CD8-positive, alpha-beta T cell (primary cell): ENCODE measurements at regions of chr9 and their contacts with region 1.

Region 1: DNA sequence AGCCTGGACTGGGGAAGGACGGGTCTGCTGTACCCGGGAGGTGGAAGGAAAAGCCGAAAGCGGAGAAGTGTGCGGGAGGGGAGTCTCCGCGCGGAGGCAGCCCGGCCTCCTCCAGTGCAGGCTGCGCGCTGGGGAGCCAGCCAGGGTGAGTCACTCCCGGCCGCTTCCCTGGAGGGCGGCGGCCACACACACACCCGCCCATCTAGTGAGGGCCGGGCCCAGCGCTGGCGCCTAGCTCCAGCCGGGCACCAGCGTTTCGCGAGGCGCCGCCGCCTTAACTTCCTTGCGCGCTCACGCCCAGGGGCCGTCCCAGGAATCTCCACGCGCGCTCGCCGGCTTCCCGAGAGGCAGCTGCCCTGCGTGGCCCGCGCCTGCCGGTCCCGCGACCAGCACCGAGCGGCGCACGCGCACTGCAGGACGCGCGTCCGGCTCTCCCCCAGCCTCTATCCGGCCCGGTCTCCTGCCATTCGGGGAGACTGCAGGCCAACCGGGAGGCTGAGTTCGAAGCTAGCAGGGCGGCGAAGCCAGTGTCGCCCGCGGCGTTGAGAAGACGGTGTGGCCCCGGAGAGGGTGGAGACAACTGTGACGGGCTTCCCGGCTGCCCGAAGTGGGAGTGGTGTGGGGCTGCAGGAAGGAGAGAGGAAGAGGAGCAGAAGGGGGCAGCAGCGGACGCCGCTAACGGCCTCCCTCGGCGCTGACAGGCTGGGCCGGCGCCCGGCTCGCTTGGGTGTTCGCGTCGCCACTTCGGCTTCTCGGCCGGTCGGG is at the start of gene JAK2:
- DNase-seq: peak; percentile 44 to 90 (median 74)
- ATAC-seq: peak; percentile 85
- H3K4me3 ChIP-seq: peak within 1 kb of the TSS; percentile 62 to 78
- H3K4me3 Mint-ChIP-seq: peak within 1 kb of the TSS; percentile 92
- H3K27ac ChIP-seq: peak within 1 kb of the TSS; percentile 58 to 80
- H3K27ac Mint-ChIP-seq: peak within 1 kb of the TSS; percentile 91
- H3K4me1 ChIP-seq: peaks cover 26% of the 10 kb centered on the region
- H3K4me1 Mint-ChIP-seq: peaks cover 25% of the 10 kb centered on the region
- H3K27me3 ChIP-seq: no peaks in the 10 kb centered on the region
- H3K27me3 Mint-ChIP-seq: no peaks in the 10 kb centered on the region
- CTCF ChIP-seq: no peak
- total RNA-seq, gene JAK2: 4.6 to 6.1 TPM

Region 2: GRCh38 chr9:4382722-4383317 is 602.0 kb before region 1 on chr9:
- CTCF ChIA-PET with region 1: no interaction called
- POLR2A ChIA-PET with region 1: no interaction called
- intact Hi-C with region 1: loop called (anchors 5 kb)
- DNase-seq: peak in 3 of 9 experiments; percentile 20 to 60 (median 45)
- ATAC-seq: peak; percentile 42
- H3K4me3 ChIP-seq: no peak overlapping the region
- H3K4me3 Mint-ChIP-seq: no peak overlapping the region
- H3K27ac ChIP-seq: no peak overlapping the region
- H3K27ac Mint-ChIP-seq: no peak overlapping the region
- H3K4me1 ChIP-seq: no peaks in the 10 kb centered on the region
- H3K4me1 Mint-ChIP-seq: peaks cover 3% of the 10 kb centered on the region
- H3K27me3 ChIP-seq: peaks cover 0 to 2% of the 10 kb centered on the region in 2 experiments
- H3K27me3 Mint-ChIP-seq: no peaks in the 10 kb centered on the region
- CTCF ChIP-seq: peak; percentile 53

Region 3: GRCh38 chr9:4740638-4741364 is 244.0 kb before region 1 on chr9 and contains the start of gene AK3:
- CTCF ChIA-PET with region 1: interaction called, 5 read pairs
- POLR2A ChIA-PET with region 1: interaction called, 16 read pairs
- intact Hi-C with region 1: loop called in 1 of 2 experiments (anchors 1 kb)
- DNase-seq: peak; percentile 71 to 94 (median 86)
- ATAC-seq: peak; percentile 93
- H3K4me3 ChIP-seq: peak within 1 kb of the TSS; percentile 76 to 97
- H3K4me3 Mint-ChIP-seq: peak within 1 kb of the TSS; percentile 87
- H3K27ac ChIP-seq: peak within 1 kb of the TSS; percentile 70 to 86
- H3K27ac Mint-ChIP-seq: peak within 1 kb of the TSS; percentile 96
- H3K4me1 ChIP-seq: peaks cover 30% of the 10 kb centered on the region
- H3K4me1 Mint-ChIP-seq: peaks cover 37% of the 10 kb centered on the region
- H3K27me3 ChIP-seq: no peaks in the 10 kb centered on the region
- H3K27me3 Mint-ChIP-seq: no peaks in the 10 kb centered on the region
- CTCF ChIP-seq: no peak
- total RNA-seq, gene AK3: 15.2 to 18.8 TPM

Region 4: DNA sequence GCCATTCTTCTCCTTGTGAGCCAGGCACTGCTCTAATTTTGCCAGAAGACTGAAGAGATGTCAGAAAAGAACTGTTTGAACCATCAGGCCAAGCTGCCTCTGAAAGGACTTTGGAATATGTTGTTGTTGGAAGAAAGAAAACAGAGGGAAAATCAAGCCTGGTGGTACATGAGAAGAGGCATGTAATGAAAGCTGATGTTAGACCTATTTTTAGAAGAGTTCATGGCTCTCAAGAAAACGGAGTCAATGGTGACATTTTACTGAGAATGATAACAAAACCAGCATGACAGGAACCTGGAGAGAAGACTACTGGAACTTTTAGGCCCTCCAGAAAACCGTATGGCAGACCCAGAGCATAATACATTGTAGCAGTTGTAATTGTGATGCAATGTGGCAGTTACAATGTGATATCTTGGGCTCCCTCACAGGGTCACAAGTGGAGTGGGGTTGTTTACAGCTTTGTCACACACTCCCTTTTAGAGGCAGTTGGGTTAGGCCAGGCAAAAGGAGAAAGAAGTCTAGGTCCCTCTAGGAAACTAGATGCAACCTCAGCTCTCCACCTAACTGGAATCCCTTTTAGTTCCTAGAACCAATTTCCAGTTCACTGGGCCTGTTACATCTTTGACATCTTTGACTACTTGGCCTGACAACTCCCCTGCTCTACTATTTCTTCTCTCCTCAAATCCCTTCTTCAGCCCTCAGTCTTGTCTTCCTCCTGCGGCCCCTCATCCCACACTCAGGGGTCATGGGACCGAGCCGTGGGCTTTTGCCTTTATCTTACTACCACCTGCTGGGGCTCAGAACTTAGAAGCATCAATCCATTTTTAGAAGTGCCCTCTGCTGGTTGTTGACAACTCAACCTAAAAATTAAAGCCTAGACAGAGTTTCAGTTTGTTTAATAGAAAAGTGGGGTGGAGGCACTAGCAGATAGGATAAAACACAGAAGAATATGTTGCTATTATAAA is 60.9 kb before region 1 on chr9:
- CTCF ChIA-PET with region 1: interaction called, 4 read pairs
- POLR2A ChIA-PET with region 1: no interaction called
- intact Hi-C with region 1: loop called in 1 of 2 experiments (anchors 2 kb)
- DNase-seq: peak in 3 of 9 experiments; percentile 9 to 55 (median 49)
- ATAC-seq: peak; percentile 46
- H3K4me3 ChIP-seq: no peak overlapping the region
- H3K4me3 Mint-ChIP-seq: no peak overlapping the region
- H3K27ac ChIP-seq: no peak overlapping the region
- H3K27ac Mint-ChIP-seq: no peak overlapping the region
- H3K4me1 ChIP-seq: no peaks in the 10 kb centered on the region
- H3K4me1 Mint-ChIP-seq: peaks cover 2% of the 10 kb centered on the region
- H3K27me3 ChIP-seq: no peaks in the 10 kb centered on the region
- H3K27me3 Mint-ChIP-seq: no peaks in the 10 kb centered on the region
- CTCF ChIP-seq: peak; percentile 37

Region 5: GRCh38 chr9:5628530-5629311 is 643.9 kb after region 1 on chr9 and contains the start of gene RIC1:
- CTCF ChIA-PET with region 1: no interaction called
- POLR2A ChIA-PET with region 1: interaction called, 4 read pairs
- intact Hi-C with region 1: loop called (anchors 2 to 10 kb)
- DNase-seq: peak; percentile 74 to 96 (median 87)
- ATAC-seq: peak; percentile 81
- H3K4me3 ChIP-seq: peak within 1 kb of the TSS; percentile 73 to 95
- H3K4me3 Mint-ChIP-seq: peak within 1 kb of the TSS; percentile 98
- H3K27ac ChIP-seq: peak within 1 kb of the TSS; percentile 84 to 88
- H3K27ac Mint-ChIP-seq: peak within 1 kb of the TSS; percentile 99
- H3K4me1 ChIP-seq: peaks cover 53% of the 10 kb centered on the region
- H3K4me1 Mint-ChIP-seq: peaks cover 63% of the 10 kb centered on the region
- H3K27me3 ChIP-seq: no peaks in the 10 kb centered on the region
- H3K27me3 Mint-ChIP-seq: no peaks in the 10 kb centered on the region
- CTCF ChIP-seq: no peak
- total RNA-seq, gene RIC1: 17.0 to 17.4 TPM

Region 6: GRCh38 chr9:6681147-6681956 is 1696.5 kb after region 1 on chr9:
- CTCF ChIA-PET with region 1: no interaction called
- POLR2A ChIA-PET with region 1: no interaction called
- intact Hi-C with region 1: loop called in 1 of 2 experiments (anchors 10 kb)
- DNase-seq: peak; percentile 77 to 96 (median 89)
- ATAC-seq: peak; percentile 85
- H3K4me3 ChIP-seq: peak overlapping the region; percentile 84 to 97
- H3K4me3 Mint-ChIP-seq: peak overlapping the region; percentile 93
- H3K27ac ChIP-seq: peak overlapping the region; percentile 94 to 96
- H3K27ac Mint-ChIP-seq: peak overlapping the region; percentile 98
- H3K4me1 ChIP-seq: peaks cover 11% of the 10 kb centered on the region
- H3K4me1 Mint-ChIP-seq: peaks cover 22% of the 10 kb centered on the region
- H3K27me3 ChIP-seq: no peaks in the 10 kb centered on the region
- H3K27me3 Mint-ChIP-seq: no peaks in the 10 kb centered on the region
- CTCF ChIP-seq: no peak